Body of pancreas (tissue), 4 donors: ENCODE measurements at regions of chr4 and their contacts with region 1.

Region 1: GRCh38 chr4:173505924-173506518 is 24.0 kb downstream of the HAND2 start:
- DNase-seq: peak; percentile 59 to 73 (median 66)
- ATAC-seq: peak; percentile 79
- H3K4me3 ChIP-seq: no peak overlapping the region
- H3K27ac ChIP-seq: no peak overlapping the region
- H3K4me1 ChIP-seq: peaks cover 5% of the 10 kb centered on the region
- H3K27me3 ChIP-seq: no peaks in the 10 kb centered on the region
- CTCF ChIP-seq: peak; percentile 51 to 80 (median 75)
- POLR2A ChIP-seq: no peak

Region 2: DNA sequence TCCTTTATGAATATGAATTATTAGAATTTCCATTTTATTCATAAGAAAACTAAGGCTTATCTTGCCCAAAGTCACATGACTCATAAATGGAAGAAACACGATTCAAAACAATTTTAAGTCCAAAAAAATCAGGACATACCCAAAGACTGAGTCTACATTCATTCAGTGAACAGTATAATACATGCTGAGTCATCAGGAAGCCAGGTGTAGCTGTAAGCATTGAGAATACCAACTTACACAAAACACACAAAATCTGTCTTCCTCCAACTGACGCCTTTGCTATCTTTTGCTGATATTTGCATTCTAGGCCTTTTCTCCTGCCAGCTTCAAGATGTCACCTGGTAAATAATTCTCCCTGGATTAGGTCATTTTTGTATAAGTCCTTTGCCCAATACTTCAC is 857.5 kb before region 1 on chr4:
- intact Hi-C with region 1: no loop called
- DNase-seq: no peak
- ATAC-seq: no peak
- H3K4me3 ChIP-seq: no peak overlapping the region
- H3K27ac ChIP-seq: no peak overlapping the region
- H3K4me1 ChIP-seq: no peaks in the 10 kb centered on the region
- H3K27me3 ChIP-seq: no peaks in the 10 kb centered on the region
- CTCF ChIP-seq: no peak
- POLR2A ChIP-seq: no peak

Region 3: DNA sequence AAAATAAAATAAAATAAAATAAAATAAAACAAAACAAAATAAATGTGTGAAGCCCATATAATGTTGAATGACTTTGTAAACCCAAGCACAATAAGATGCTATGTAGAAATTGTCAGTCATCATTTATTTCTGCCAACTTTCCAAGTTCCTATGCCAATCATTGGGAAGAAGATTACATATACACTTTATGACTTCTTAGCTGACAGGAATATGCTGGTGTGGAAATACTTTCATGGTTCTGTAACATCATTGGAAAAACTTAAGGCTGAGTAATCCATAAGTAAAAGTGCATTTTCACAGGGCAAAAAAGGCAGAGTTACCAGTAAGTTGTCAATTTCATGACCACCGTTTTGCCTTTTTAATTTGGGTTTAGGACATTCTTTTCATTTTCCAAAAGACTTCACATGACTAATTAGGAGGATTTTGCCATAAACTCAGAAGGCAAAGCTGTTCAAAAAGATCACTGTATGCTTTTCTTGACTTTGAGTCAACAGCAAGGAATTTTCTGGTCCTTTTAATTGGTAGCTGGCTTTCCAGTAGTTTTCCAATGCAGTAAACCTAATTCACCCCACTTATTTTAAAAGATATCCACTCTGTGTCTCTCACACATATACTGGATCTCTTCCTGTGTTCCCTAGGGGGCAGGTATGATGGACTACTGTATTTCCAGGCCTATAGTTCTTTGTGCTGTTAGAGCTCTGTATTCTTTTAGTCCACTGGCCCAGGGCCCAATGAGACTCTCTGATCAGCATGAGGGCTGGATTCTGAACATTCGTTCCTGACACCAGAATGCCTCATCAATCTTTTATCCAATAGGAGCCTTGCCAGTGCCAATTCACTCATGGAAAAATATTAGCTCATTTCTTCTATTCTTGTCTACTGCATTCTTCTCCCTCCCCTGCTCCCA is 80.9 kb before region 1 on chr4:
- intact Hi-C with region 1: no loop called
- DNase-seq: no peak
- ATAC-seq: no peak
- H3K4me3 ChIP-seq: no peak overlapping the region
- H3K27ac ChIP-seq: no peak overlapping the region
- H3K4me1 ChIP-seq: peaks cover 3% of the 10 kb centered on the region
- H3K27me3 ChIP-seq: no peaks in the 10 kb centered on the region
- CTCF ChIP-seq: no peak
- POLR2A ChIP-seq: no peak

Region 4: DNA sequence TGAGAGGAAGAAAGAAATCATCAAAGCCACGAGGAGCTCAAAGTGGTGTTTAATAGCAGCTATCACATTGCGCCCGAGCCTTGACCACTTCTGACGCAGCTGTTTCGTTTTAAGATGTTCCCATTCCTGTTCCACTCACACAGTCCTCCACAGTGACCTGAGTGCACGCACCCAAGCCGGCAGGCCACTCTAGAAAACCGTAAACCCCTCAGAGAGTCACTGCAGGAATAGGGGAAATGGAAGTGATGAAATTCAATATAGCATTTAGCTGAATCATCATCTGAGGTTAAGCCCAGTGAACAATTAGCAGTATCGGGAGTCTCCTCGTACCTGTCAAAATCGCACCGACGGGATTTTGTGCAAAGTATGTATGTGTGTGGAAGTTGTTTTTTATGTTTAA is 41.9 kb after region 1 on chr4:
- intact Hi-C with region 1: no loop called
- DNase-seq: no peak
- ATAC-seq: no peak
- H3K4me3 ChIP-seq: no peak overlapping the region
- H3K27ac ChIP-seq: no peak overlapping the region
- H3K4me1 ChIP-seq: no peaks in the 10 kb centered on the region
- H3K27me3 ChIP-seq: no peaks in the 10 kb centered on the region
- CTCF ChIP-seq: no peak
- POLR2A ChIP-seq: no peak

Region 5: GRCh38 chr4:173661001-173661400 is 155.0 kb after region 1 on chr4:
- intact Hi-C with region 1: no loop called
- DNase-seq: no peak
- ATAC-seq: no peak
- H3K4me3 ChIP-seq: no peak overlapping the region
- H3K27ac ChIP-seq: no peak overlapping the region
- H3K4me1 ChIP-seq: no peaks in the 10 kb centered on the region
- H3K27me3 ChIP-seq: no peaks in the 10 kb centered on the region
- CTCF ChIP-seq: no peak
- POLR2A ChIP-seq: no peak

Region 6: GRCh38 chr4:173752610-173753230 is 246.7 kb after region 1 on chr4:
- intact Hi-C with region 1: loop called (anchors 10 kb)
- DNase-seq: peak; percentile 21 to 54 (median 52)
- ATAC-seq: no peak
- H3K4me3 ChIP-seq: no peak overlapping the region
- H3K27ac ChIP-seq: no peak overlapping the region
- H3K4me1 ChIP-seq: no peaks in the 10 kb centered on the region
- H3K27me3 ChIP-seq: no peaks in the 10 kb centered on the region
- CTCF ChIP-seq: peak in 6 of 7 experiments; percentile 24 to 45 (median 34)
- POLR2A ChIP-seq: no peak

Region 7: GRCh38 chr4:174120446-174121295 is 614.6 kb after region 1 on chr4:
- intact Hi-C with region 1: loop called (anchors 5 kb)
- DNase-seq: peak; percentile 36 to 58 (median 48)
- ATAC-seq: peak; percentile 91
- H3K4me3 ChIP-seq: peak overlapping the region in 1 of 2 donors; percentile 6
- H3K27ac ChIP-seq: no peak overlapping the region
- H3K4me1 ChIP-seq: no peaks in the 10 kb centered on the region
- H3K27me3 ChIP-seq: no peaks in the 10 kb centered on the region
- CTCF ChIP-seq: peak; percentile 27 to 84 (median 58)
- POLR2A ChIP-seq: no peak